ENCODE measurements at regions of chr5 and their contacts with region 1.

Region 1: GRCh38 chr5:149442563-149443182 is 63.6 kb upstream of the IL17B start:
- DNase-seq: peak; percentile 91
- H3K4me3 ChIP-seq: no peak overlapping the region; a peak in 1 of 4 replicates
- H3K27ac ChIP-seq: peak overlapping the region; percentile 51 to 70; a peak in 3 of 4 replicates
- H3K4me1 ChIP-seq: peaks cover 4 to 19% of the 10 kb centered on the region in 2 experiments; a peak in 2 of 4 replicates
- H3K27me3 ChIP-seq: no peaks in the 10 kb centered on the region
- CTCF ChIP-seq: peak; percentile 93
- EP300 ChIP-seq: no peak
- RAD21 ChIP-seq: peak; percentile 88

Region 2: DNA sequence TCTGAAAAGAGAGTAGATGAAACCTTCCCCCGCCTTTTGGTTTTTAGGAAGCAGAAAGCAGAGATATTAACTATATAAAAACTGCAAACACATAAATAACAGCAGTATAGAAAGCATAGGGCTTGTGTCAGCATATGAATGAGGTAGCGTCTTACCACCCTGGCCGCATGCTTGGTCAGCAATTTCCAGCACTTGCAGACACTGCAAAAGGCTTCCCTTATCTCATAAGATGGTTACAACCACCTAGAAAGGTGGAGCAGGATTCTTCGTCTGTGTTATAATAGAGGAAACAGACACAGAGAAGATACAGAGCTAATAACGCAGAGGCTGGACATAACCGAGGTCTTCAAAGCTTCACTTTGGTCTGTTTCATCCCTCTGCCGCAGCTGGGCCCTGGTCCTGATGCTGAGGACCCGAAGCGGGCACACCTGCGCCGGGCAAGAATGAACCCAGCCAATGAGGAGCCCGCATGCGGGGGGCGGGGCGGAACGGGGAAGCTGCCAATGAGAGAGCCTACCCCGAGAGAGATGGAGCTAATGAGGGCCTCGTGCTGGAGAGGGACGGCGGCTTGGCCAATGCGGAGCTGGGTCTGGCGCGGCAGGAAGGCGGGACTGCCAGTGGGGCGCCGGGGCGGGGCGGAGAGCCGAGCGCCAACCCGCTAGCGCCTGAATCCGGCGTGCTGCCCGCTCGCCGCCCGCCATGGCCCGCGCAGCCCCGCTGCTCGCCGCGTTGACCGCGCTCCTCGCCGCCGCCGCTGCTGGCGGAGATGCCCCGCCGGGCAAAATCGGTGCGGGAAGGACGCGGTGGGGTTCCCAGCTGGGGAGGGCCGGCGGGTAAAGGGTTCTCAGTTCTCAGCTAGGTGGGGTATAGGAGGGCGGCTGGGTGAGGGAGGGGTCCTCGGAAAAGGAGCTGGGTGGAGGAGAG is 85.0 kb before region 1 on chr5 and contains the start of gene PCYOX1L:
- CTCF ChIA-PET with region 1: interaction called, 1,751 read pairs
- POLR2A ChIA-PET with region 1: no interaction called
- DNase-seq: peak; percentile 98
- H3K4me3 ChIP-seq: peak within 1 kb of the TSS; percentile 62 to 85
- H3K27ac ChIP-seq: peak within 1 kb of the TSS in 1 of 2 experiments; percentile 84; a peak in 2 of 4 replicates
- H3K4me1 ChIP-seq: peaks cover 0 to 12% of the 10 kb centered on the region in 2 experiments; a peak in 1 of 4 replicates
- H3K27me3 ChIP-seq: no peaks in the 10 kb centered on the region
- CTCF ChIP-seq: no peak
- EP300 ChIP-seq: no peak
- RAD21 ChIP-seq: no peak
- polyA plus RNA-seq, gene PCYOX1L: 17.4 and 17.5 TPM in 2 replicates

Region 3: GRCh38 chr5:149551200-149552037 is 108.7 kb after region 1 on chr5 and contains the start of gene CSNK1A1:
- CTCF ChIA-PET with region 1: interaction called, 79 read pairs
- POLR2A ChIA-PET with region 1: interaction called, 4 read pairs
- DNase-seq: peak; percentile 99
- H3K4me3 ChIP-seq: peak within 1 kb of the TSS; percentile 88 to 95
- H3K27ac ChIP-seq: peak within 1 kb of the TSS; percentile 92 to 96
- H3K4me1 ChIP-seq: peaks cover 6 to 15% of the 10 kb centered on the region in 2 experiments; a peak in 3 of 4 replicates
- H3K27me3 ChIP-seq: no peaks in the 10 kb centered on the region
- CTCF ChIP-seq: peak; percentile 78
- EP300 ChIP-seq: 0 out of 4 replicates have a peak, but pooled peaks have one; percentile 6 to 19
- RAD21 ChIP-seq: peak; percentile 66
- polyA plus RNA-seq, gene CSNK1A1: 70.7 and 96.6 TPM in 2 replicates

Region 4: GRCh38 chr5:149567226-149567625 is 124.6 kb after region 1 on chr5:
- CTCF ChIA-PET with region 1: interaction called, 111 read pairs
- POLR2A ChIA-PET with region 1: no interaction called
- DNase-seq: no peak
- H3K4me3 ChIP-seq: no peak overlapping the region
- H3K27ac ChIP-seq: no peak overlapping the region
- H3K4me1 ChIP-seq: peaks cover 5 to 18% of the 10 kb centered on the region in 2 experiments
- H3K27me3 ChIP-seq: no peaks in the 10 kb centered on the region
- CTCF ChIP-seq: no peak
- EP300 ChIP-seq: no peak
- RAD21 ChIP-seq: no peak

Region 5: GRCh38 chr5:149618581-149619251 is 176.0 kb after region 1 on chr5:
- CTCF ChIA-PET with region 1: interaction called, 46 read pairs
- POLR2A ChIA-PET with region 1: no interaction called
- DNase-seq: peak; percentile 78
- H3K4me3 ChIP-seq: no peak overlapping the region; a peak in 1 of 4 replicates
- H3K27ac ChIP-seq: no peak overlapping the region
- H3K4me1 ChIP-seq: peaks cover 5 to 14% of the 10 kb centered on the region in 2 experiments; a peak in 1 of 4 replicates
- H3K27me3 ChIP-seq: no peaks in the 10 kb centered on the region
- CTCF ChIP-seq: peak; percentile 79
- EP300 ChIP-seq: no peak
- RAD21 ChIP-seq: peak; percentile 80

Measured in SK-N-SH (cell line).